ENCODE measurements at regions of chr7 and their contacts with region 1.

Region 1: DNA sequence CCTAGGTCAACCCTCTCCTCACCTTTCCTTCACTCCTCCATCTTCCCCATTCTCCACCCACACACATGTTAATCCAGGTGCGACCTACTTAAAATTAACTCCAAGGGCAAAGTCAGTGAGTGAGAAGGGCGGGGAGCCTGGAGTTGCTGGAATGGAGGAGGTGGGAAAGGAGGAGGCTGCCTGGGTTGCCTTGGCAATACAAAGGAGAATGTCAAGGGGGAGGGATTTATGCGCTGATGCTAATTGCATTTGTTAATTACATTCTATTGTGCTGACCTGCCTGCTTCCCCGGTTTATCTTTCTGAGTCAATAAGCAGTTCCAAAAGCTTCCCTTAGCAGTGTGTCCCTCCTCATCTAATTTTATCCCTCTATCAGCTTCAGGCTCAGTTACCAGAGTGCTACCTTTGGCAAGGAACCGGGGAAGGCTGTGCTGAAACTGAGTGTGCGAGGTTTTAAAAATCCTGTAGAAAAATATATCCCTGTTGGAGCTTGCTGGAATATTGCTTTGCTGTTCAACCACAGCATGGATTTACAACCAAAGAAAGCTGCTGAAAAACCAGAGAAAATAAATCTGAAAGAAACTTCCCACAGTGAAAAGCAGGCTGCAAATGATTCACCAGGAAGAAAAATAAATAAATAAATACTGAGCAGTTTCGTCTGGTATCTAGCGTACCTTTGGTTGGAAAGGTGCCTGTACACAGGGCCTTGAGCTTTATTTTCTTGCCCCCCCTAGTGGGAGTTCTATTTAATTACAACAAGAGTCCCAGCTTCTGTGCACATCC is 113.2 kb upstream of the DGKB start:
- DNase-seq: no peak
- H3K4me3 ChIP-seq: peak overlapping the region in 2 of 3 donors; percentile 20 to 40
- H3K27ac ChIP-seq: no peak overlapping the region
- H3K4me1 ChIP-seq: no peaks in the 10 kb centered on the region
- H3K27me3 ChIP-seq: no peaks in the 10 kb centered on the region
- CTCF ChIP-seq: peak; percentile 44 to 60 (median 55)
- POLR2A ChIP-seq: no peak

Region 2: DNA sequence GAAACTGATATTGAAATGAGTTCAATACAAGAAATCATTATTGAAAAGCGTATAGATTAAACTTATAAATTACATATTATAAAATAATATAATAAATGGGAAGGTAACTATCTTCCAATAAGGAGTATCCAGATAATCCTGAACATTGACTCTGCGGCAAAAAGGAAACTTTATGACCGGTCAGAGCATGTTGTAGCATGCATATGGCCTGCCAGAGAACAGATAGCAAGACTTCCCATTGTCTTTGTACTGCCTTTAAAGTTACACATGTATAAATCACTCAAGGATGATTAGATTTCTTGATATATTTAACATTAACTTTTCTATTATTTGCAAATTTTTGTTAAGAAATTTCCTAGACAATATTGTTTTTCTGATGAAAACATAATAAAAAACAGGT is 970.1 kb before region 1 on chr7:
- intact Hi-C with region 1: no loop called
- DNase-seq: no peak
- H3K4me3 ChIP-seq: no peak overlapping the region
- H3K27ac ChIP-seq: no peak overlapping the region
- H3K4me1 ChIP-seq: no peaks in the 10 kb centered on the region
- H3K27me3 ChIP-seq: no peaks in the 10 kb centered on the region
- CTCF ChIP-seq: no peak
- POLR2A ChIP-seq: no peak

Region 3: DNA sequence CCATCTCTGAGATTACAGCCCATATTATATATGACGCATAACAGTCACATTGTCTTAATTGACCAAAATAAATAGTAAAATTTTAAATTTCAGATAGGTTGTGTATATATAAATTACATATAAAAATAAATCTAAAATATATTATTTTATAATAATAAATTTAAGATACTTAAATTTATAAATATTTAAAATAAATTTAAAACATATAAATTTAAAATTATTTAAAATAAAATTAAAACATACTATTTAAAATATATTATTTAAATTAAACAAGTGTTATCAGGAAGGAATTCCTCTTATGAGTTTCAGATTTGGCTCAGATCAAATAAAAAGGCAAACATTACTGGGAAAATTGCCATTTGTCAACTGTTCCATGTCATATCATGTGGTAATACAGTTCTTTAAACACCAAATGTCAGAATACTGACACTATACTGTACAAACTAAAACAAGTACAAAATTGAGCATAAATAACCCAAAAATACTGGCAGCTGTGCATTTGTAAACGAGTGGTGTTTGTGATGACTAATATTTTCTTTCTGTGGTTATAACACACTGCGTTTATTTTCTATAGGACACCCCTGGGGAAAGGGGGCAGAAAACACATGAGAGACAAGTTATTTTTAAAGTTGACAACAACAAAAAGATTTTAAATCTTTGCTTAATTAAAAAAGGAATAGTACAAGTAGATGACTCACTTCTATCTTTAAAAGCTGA is 41.9 kb before region 1 on chr7:
- intact Hi-C with region 1: loop called (anchors 2 kb)
- DNase-seq: no peak
- H3K4me3 ChIP-seq: no peak overlapping the region
- H3K27ac ChIP-seq: no peak overlapping the region
- H3K4me1 ChIP-seq: no peaks in the 10 kb centered on the region
- H3K27me3 ChIP-seq: no peaks in the 10 kb centered on the region
- CTCF ChIP-seq: no peak
- POLR2A ChIP-seq: no peak

Region 4: GRCh38 chr7:15043931-15044330 is 28.2 kb after region 1 on chr7:
- intact Hi-C with region 1: no loop called
- DNase-seq: no peak
- H3K4me3 ChIP-seq: no peak overlapping the region
- H3K27ac ChIP-seq: no peak overlapping the region
- H3K4me1 ChIP-seq: no peaks in the 10 kb centered on the region
- H3K27me3 ChIP-seq: no peaks in the 10 kb centered on the region
- CTCF ChIP-seq: no peak
- POLR2A ChIP-seq: no peak

Measured in breast epithelium (tissue), 4 donors.